H1 (cell line): ENCODE measurements at regions of chr3 and their contacts with region 1.

Region 1: GRCh38 chr3:23945903-23946751 is 1.0 kb downstream of the NR1D2 start:
- DNase-seq: peak; percentile 82 to 99
- H3K4me3 ChIP-seq: peak overlapping the region; percentile 91 to 94 (median 92)
- H3K27ac ChIP-seq: peak overlapping the region; percentile 97
- H3K4me1 ChIP-seq: peaks cover 8 to 17% (median 12%) of the 10 kb centered on the region in 4 experiments; a peak in 6 of 7 replicates
- H3K27me3 ChIP-seq: no peaks in the 10 kb centered on the region; a peak in 1 of 7 replicates
- CTCF ChIP-seq: no peak
- EP300 ChIP-seq: peak in 1 of 2 experiments; percentile 73; a peak in 1 of 3 replicates
- POLR2A ChIP-seq: peak; percentile 74 to 76
- RAD21 ChIP-seq: peak in 1 of 2 experiments; percentile 0; a peak in 1 of 4 replicates

Region 2: DNA sequence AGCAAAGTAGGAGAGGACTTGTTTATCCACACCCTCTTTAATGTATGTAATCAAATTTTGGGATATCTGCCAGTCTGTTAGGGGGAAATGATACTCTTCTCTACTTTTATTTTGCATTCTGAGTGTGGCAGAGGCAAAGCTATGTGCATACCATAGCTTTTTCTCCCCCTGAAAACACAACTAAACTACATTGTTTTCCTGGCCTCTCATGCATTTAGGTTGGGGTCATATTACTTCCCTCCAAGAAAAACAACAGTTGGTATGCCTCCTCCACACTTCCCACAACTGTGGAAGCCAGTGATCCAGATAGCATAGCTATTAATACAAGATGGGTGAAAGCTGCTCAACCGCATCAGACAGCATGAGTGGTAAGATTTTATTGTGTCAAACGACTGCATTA is 22.3 kb before region 1 on chr3:
- CTCF ChIA-PET with region 1: interaction called, 5 read pairs
- POLR2A ChIA-PET with region 1: interaction called, 363 read pairs
- DNase-seq: no peak
- H3K4me3 ChIP-seq: no peak overlapping the region; a peak in 1 of 8 replicates
- H3K27ac ChIP-seq: no peak overlapping the region
- H3K4me1 ChIP-seq: peaks cover 0 to 3% (median 1%) of the 10 kb centered on the region in 4 experiments; a peak in 2 of 7 replicates
- H3K27me3 ChIP-seq: no peaks in the 10 kb centered on the region
- CTCF ChIP-seq: no peak
- EP300 ChIP-seq: no peak
- POLR2A ChIP-seq: no peak
- RAD21 ChIP-seq: no peak

Region 3: GRCh38 chr3:23959135-23959900 is 13.2 kb after region 1 on chr3:
- CTCF ChIA-PET with region 1: interaction called, 3 read pairs
- POLR2A ChIA-PET with region 1: interaction called, 14 read pairs
- DNase-seq: no peak
- H3K4me3 ChIP-seq: no peak overlapping the region
- H3K27ac ChIP-seq: no peak overlapping the region
- H3K4me1 ChIP-seq: no peaks in the 10 kb centered on the region
- H3K27me3 ChIP-seq: no peaks in the 10 kb centered on the region
- CTCF ChIP-seq: no peak
- EP300 ChIP-seq: no peak
- POLR2A ChIP-seq: no peak
- RAD21 ChIP-seq: no peak

Region 4: DNA sequence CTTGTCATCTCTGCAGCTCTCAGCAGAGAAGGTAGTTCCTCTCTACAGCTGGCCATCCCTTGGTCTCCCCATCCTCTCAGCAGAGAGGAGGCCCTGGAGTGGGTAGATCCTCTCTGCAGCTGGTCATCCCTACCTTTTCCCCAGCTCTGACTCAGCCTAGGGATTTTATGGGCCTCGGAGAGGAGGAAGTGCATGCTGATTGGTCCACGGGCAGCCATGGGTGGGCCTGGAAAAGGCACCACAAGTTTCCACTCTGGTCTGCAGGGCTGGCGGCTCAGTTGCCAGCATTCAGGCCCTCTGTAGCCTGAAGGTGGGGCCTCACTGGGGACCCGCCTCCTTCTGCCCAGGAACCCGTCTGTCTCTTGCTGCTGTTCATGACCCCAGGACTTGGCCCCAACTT is 35.8 kb after region 1 on chr3:
- CTCF ChIA-PET with region 1: no interaction called
- POLR2A ChIA-PET with region 1: interaction called, 12 read pairs
- DNase-seq: peak in 1 of 2 experiments; percentile 54
- H3K4me3 ChIP-seq: no peak overlapping the region
- H3K27ac ChIP-seq: no peak overlapping the region
- H3K4me1 ChIP-seq: no peaks in the 10 kb centered on the region
- H3K27me3 ChIP-seq: no peaks in the 10 kb centered on the region
- CTCF ChIP-seq: no peak
- EP300 ChIP-seq: no peak
- POLR2A ChIP-seq: no peak
- RAD21 ChIP-seq: no peak

Region 5: DNA sequence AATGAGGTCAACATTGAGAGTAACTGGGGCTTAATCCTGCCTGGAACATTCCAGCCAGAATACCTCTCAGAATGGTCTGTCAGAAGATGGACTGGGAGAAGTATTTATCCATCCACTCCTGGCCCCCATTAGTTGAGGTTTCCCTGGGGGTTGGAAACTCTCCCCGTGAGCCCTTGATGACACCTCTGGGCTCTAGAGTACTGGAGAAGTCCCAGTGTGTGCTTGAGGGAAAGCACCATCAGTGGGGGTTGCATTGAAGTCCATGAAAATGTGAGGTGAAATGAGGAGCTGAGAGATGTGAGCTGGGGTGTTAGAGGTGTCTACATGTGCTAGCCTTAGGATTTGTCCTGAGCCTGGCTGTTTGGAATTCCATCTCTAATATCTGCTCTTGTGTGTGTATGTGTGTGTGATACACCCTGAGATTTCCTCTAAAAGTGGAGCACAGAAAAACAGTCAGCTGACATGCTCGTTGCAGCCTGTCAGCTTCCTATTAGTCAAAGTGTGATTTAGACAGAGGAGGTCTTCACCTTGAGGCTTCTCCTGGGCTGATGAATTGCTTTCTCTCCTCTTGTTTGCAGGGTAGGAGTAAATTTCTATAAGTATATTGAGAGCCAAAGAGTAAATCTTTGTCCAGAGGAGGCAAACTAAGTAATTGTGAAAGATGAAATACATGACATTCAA is 66.6 kb after region 1 on chr3:
- CTCF ChIA-PET with region 1: no interaction called
- POLR2A ChIA-PET with region 1: no interaction called
- DNase-seq: no peak
- H3K4me3 ChIP-seq: no peak overlapping the region
- H3K27ac ChIP-seq: no peak overlapping the region
- H3K4me1 ChIP-seq: no peaks in the 10 kb centered on the region
- H3K27me3 ChIP-seq: no peaks in the 10 kb centered on the region
- CTCF ChIP-seq: no peak
- EP300 ChIP-seq: no peak
- POLR2A ChIP-seq: no peak
- RAD21 ChIP-seq: no peak